Aorta (tissue), 5 donors: ENCODE measurements at regions of chr3 and their contacts with region 1.

Region 1: GRCh38 chr3:112470788-112471187 is 28.5 kb downstream of the BTLA start:
- DNase-seq: no peak
- ATAC-seq: no peak
- H3K4me3 ChIP-seq: no peak overlapping the region
- H3K27ac ChIP-seq: peak overlapping the region in 1 of 2 donors; percentile 67
- H3K4me1 ChIP-seq: peaks cover 4 to 18% of the 10 kb centered on the region in 2 donors
- H3K27me3 ChIP-seq: no peaks in the 10 kb centered on the region

Region 2: DNA sequence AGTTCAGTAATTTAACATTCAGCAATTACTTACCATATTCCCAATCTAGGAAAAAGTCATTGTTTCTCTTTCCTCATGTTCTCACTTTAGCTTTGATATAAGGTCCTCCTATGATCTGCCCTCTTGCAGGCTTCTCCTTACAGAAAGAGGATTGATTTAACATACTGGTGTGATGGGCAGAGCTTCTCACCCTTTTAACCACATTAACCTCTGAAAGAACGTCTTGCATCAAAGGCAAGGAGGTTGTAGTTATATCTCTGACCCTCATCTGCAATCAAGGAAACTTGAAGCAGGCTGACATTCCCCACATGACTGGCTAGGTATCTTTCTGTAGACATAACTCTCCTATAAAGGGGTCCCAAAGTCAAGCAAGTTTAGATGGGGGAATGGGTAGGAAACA is 11.0 kb before region 1 on chr3:
- intact Hi-C with region 1: loop called in 1 of 2 experiments (anchors 1 kb)
- DNase-seq: no peak
- ATAC-seq: no peak
- H3K4me3 ChIP-seq: no peak overlapping the region
- H3K27ac ChIP-seq: no peak overlapping the region
- H3K4me1 ChIP-seq: peaks cover 2% of the 10 kb centered on the region in 2 donors
- H3K27me3 ChIP-seq: no peaks in the 10 kb centered on the region

Region 3: GRCh38 chr3:112508860-112509259 is 38.1 kb after region 1 on chr3:
- intact Hi-C with region 1: loop called in 1 of 2 experiments (anchors 2 kb)
- DNase-seq: no peak
- ATAC-seq: no peak
- H3K4me3 ChIP-seq: no peak overlapping the region
- H3K27ac ChIP-seq: peak overlapping the region; percentile 76 to 88
- H3K4me1 ChIP-seq: no peaks in the 10 kb centered on the region
- H3K27me3 ChIP-seq: no peaks in the 10 kb centered on the region